OCI-LY7 (cell line): ENCODE measurements at regions of chr18 and their contacts with region 1.

Region 1: GRCh38 chr18:80034068-80034851 is at the start of gene RBFA:
- DNase-seq: peak; percentile 89
- H3K4me3 ChIP-seq: peak within 1 kb of the TSS; percentile 73
- H3K27ac ChIP-seq: peak within 1 kb of the TSS; percentile 54
- H3K4me1 ChIP-seq: peaks cover 19% of the 10 kb centered on the region
- CTCF ChIP-seq: peak; percentile 43; the same call in 1 of the 2 replicates
- total RNA-seq, gene RBFA: 20.4 and 25.9 TPM in 2 replicates

Region 2: GRCh38 chr18:79679111-79679872 is 355.0 kb before region 1 on chr18 and contains the start of gene CTDP1:
- CTCF ChIA-PET with region 1: no interaction called
- POLR2A ChIA-PET with region 1: no interaction called
- intact Hi-C with region 1: loop called (anchors 2 kb)
- DNase-seq: peak; percentile 96
- H3K4me3 ChIP-seq: peak within 1 kb of the TSS; percentile 80
- H3K27ac ChIP-seq: peak within 1 kb of the TSS; percentile 74
- H3K4me1 ChIP-seq: peaks cover 26% of the 10 kb centered on the region
- CTCF ChIP-seq: no peak
- total RNA-seq, gene CTDP1: 9.6 and 11.9 TPM in 2 replicates

Region 3: DNA sequence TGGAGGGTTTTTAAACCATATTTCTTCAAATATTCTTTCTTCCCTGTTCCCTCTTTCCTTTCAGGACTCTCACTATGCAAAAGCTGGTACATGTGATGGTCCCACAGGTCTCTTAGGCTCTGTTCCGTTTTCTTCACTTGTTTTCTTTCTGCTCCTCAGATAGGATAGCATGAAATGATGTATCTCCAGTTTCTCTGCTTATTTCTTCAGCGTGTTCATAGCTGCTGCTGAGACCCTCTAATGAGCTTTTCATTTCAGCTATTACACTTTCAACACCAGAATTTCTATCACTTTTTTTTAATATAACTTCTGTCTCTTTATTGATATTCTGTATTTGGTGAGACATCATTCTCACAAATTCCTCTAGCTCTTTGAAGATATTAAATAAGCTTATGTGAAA is 172.6 kb before region 1 on chr18:
- CTCF ChIA-PET with region 1: interaction called, 10 read pairs
- POLR2A ChIA-PET with region 1: no interaction called
- intact Hi-C with region 1: no loop called
- DNase-seq: no peak
- H3K4me3 ChIP-seq: no peak overlapping the region
- H3K27ac ChIP-seq: no peak overlapping the region
- H3K4me1 ChIP-seq: no peaks in the 10 kb centered on the region
- CTCF ChIP-seq: no peak

Region 4: GRCh38 chr18:79988451-79989194 is 45.6 kb before region 1 on chr18 and contains the start of gene TXNL4A:
- CTCF ChIA-PET with region 1: interaction called, 3 read pairs
- POLR2A ChIA-PET with region 1: no interaction called
- intact Hi-C with region 1: loop called (anchors 1 kb)
- DNase-seq: peak; percentile 86
- H3K4me3 ChIP-seq: peak within 1 kb of the TSS; percentile 98
- H3K27ac ChIP-seq: peak within 1 kb of the TSS; percentile 78
- H3K4me1 ChIP-seq: peaks cover 12% of the 10 kb centered on the region
- CTCF ChIP-seq: no peak
- total RNA-seq, gene TXNL4A: 44.7 and 45.9 TPM in 2 replicates

Region 5: GRCh38 chr18:80046961-80047541 is 12.8 kb after region 1 on chr18:
- CTCF ChIA-PET with region 1: no interaction called
- POLR2A ChIA-PET with region 1: no interaction called
- intact Hi-C with region 1: no loop called
- DNase-seq: no peak
- H3K4me3 ChIP-seq: no peak overlapping the region
- H3K27ac ChIP-seq: no peak overlapping the region
- H3K4me1 ChIP-seq: no peaks in the 10 kb centered on the region
- CTCF ChIP-seq: no peak

Region 6: DNA sequence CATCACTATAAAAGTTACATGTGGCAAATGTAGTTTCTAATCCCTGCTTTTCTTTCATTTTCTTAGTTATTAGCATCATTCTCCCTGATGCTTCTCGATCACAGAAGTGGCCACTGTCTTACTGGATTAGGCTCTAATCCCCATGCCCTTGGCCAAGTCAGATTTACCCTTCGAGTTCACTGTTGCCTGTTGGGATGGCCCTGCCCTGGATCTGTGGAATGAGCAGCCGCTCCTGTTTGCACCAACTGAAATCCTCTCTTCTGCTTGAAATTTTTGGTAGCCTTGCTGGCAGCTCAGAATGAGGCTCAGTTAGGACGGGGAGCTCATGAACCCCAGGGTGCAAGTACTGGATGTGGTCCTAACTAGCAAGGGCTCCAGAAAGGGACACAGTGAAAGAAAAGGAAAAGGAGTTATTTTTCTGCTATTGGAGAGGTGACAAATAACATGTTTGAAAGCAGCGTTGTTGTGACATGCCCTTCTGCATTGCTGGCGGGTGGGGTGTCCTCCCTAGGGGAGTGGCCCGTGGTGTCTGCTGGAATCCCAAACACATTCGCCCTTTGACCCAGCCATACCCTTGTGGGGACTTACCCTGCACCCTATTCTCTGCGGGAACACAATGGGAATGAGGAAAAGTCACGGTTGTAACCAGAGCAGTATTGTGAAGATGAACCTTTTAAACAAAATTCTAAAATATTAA is 34.5 kb after region 1 on chr18:
- CTCF ChIA-PET with region 1: no interaction called
- POLR2A ChIA-PET with region 1: no interaction called
- intact Hi-C with region 1: no loop called
- DNase-seq: no peak
- H3K4me3 ChIP-seq: no peak overlapping the region
- H3K27ac ChIP-seq: no peak overlapping the region
- H3K4me1 ChIP-seq: no peaks in the 10 kb centered on the region
- CTCF ChIP-seq: no peak

Region 7: DNA sequence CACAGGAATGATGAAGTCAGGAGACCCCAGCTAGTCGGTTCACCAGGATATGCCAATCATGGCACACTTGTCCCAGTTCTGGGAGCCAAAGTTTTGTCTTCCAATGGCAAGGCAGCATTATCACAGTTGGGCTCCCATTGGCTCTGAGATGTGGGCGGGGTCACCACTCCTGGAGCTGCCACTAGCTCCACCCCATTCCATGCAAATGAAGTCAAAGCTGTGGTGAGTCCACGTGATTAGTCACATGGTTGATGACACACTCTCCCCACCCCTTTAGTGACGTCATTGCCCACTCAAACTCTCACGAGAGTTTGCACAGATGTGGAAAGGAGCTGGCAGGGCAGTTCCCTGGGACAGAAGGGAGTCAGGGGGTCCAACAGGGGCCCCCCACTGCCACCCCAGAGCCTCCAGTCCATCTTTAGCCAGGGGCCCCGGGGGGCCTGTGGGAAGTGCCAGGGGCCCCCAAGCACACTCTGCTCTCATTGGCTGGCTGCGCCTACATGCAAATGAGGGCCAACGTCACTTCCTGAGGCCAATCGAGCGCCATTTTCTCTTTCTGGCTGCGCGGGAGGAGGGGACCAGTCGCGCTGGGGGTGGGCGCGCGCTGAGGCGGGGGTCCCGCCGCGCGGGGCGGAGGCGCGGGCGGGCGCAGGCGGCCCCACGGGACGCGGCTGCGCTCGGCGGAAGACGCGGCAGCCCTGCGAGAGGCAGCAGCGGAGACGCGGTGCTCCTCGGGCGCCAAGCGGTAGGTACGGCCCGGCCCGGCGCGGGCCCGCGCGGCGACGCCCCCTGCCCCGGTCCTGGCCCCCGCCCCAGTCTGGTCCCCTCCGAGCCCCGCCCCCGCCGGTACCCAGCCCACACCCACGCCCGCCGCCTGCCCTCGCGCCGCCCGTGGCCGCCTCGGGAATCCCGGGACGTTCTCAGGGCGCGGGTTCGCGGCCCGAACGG is 74.7 kb after region 1 on chr18 and contains the start of gene ADNP2:
- CTCF ChIA-PET with region 1: no interaction called
- POLR2A ChIA-PET with region 1: no interaction called
- intact Hi-C with region 1: loop called (anchors 5 kb)
- DNase-seq: peak; percentile 86
- H3K4me3 ChIP-seq: peak within 1 kb of the TSS; percentile 78
- H3K27ac ChIP-seq: peak within 1 kb of the TSS; percentile 69
- H3K4me1 ChIP-seq: peaks cover 23% of the 10 kb centered on the region
- CTCF ChIP-seq: no peak
- total RNA-seq, gene ADNP2: 10.2 and 14.0 TPM in 2 replicates